G401 (cell line): ENCODE measurements at regions of chr17 and their contacts with region 1.

Region 1: GRCh38 chr17:39069114-39069756 is 82.2 kb downstream of the PLXDC1 start:
- DNase-seq: peak; percentile 66

Region 2: GRCh38 chr17:39001703-39002637 is 67.3 kb before region 1 on chr17:
- in situ Hi-C with region 1: no loop called
- DNase-seq: no peak

Region 3: DNA sequence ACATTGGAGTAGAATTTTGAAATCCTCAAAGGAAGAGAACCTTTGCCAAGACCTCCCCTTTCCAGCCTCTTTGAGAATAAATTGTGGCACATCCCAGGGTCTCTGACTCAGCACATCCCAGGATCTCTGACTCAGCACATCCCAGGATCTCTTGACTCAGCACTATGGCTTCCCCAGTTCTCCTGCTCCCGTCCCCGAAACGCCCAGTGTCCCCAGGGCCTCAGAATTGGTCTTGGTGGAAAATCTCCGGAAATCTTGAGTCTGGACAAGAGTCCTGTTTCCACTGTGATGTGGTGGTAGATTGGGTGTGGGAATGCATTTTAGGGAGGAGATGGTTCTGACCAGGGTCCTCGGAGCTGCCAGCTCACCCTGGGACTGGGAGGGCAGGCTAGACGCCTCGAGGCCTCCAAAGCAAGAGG is 63.0 kb after region 1 on chr17:
- in situ Hi-C with region 1: no loop called
- DNase-seq: no peak

Region 4: DNA sequence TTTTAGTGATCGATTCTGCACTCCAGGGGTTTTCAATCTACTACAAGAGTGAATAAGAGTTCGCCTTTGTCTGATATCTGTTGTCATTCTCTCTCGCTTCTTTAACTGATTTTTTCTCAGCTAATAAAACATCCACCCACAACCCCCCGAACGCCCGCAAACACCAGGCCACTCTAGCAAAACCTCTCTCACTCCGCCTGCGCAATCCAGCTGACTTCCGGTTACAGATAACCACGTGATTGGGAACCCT is 130.5 kb after region 1 on chr17:
- in situ Hi-C with region 1: loop called (anchors 25 kb)
- DNase-seq: peak; percentile 93